PC-9 (cell line): ENCODE measurements at regions of chr1 and their contacts with region 1.

Region 1: DNA sequence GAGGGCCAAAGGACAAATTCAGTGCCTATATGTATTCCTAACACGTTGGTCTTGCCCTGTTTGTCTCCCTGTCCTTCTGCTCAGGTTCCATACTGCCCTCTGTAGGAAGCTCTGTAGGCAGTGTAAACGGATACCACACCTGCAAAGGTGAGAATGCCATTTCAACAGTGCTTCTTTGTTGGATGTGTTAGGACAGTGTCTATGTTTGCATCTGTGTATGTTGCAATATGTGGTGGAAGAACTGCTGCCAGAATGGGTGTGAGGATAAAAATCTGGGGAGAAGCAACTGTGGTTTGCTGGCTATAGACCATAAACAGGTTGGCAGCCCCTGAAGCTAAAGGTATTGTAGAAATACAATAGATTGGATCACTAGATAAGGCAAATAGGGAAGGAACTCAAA is 113.1 kb upstream of the BMP8A start:
- DNase-seq: peak; percentile 34 to 84
- H3K4me3 ChIP-seq: no peak overlapping the region
- H3K27ac ChIP-seq: no peak overlapping the region
- H3K4me1 ChIP-seq: peaks cover 10% of the 10 kb centered on the region; the same call in 1 of the 2 replicates
- H3K27me3 ChIP-seq: no peaks in the 10 kb centered on the region
- CTCF ChIP-seq: peak; percentile 68

Region 2: GRCh38 chr1:39391691-39392679 is 13.6 kb after region 1 on chr1:
- CTCF ChIA-PET with region 1: interaction called, 14 read pairs
- POLR2A ChIA-PET with region 1: interaction called, 9 read pairs
- intact Hi-C with region 1: no loop called
- DNase-seq: peak; percentile 31 to 72
- H3K4me3 ChIP-seq: peak overlapping the region; percentile 25
- H3K27ac ChIP-seq: peak overlapping the region; percentile 79
- H3K4me1 ChIP-seq: peaks cover 74% of the 10 kb centered on the region
- H3K27me3 ChIP-seq: no peaks in the 10 kb centered on the region
- CTCF ChIP-seq: no peak

Region 3: GRCh38 chr1:39398278-39399021 is 20.1 kb after region 1 on chr1:
- CTCF ChIA-PET with region 1: interaction called, 11 read pairs
- POLR2A ChIA-PET with region 1: no interaction called
- intact Hi-C with region 1: no loop called
- DNase-seq: peak; percentile 91 to 100
- H3K4me3 ChIP-seq: peak overlapping the region; percentile 22; the same call in 1 of the 2 replicates
- H3K27ac ChIP-seq: peak overlapping the region; percentile 91
- H3K4me1 ChIP-seq: peaks cover 66% of the 10 kb centered on the region
- H3K27me3 ChIP-seq: no peaks in the 10 kb centered on the region
- CTCF ChIP-seq: no peak

Region 4: DNA sequence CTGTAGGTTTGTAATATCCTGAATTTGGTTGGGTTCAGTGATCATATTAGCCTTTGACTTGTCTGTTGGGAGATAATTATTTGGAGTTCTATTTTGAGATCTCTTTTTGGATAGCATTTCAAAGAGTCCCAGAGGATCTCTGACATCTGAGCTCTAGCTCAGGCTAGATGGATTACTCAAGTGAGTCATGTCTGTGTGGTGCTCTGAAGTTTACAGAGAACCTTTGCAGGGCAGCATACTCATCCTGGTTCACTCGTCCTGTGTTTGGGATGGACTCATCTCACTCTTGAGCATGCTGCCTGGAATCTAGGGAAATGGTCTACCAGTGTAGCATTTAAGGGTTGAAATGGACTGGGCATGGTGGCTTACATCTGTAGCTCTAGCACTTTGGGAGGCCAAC is 83.7 kb after region 1 on chr1:
- CTCF ChIA-PET with region 1: no interaction called
- POLR2A ChIA-PET with region 1: interaction called, 20 read pairs
- intact Hi-C with region 1: no loop called
- DNase-seq: no peak
- H3K4me3 ChIP-seq: no peak overlapping the region
- H3K27ac ChIP-seq: no peak overlapping the region
- H3K4me1 ChIP-seq: no peaks in the 10 kb centered on the region
- H3K27me3 ChIP-seq: no peaks in the 10 kb centered on the region
- CTCF ChIP-seq: no peak

Region 5: GRCh38 chr1:39808784-39809517 is 430.6 kb after region 1 on chr1:
- CTCF ChIA-PET with region 1: no interaction called
- POLR2A ChIA-PET with region 1: no interaction called
- intact Hi-C with region 1: no loop called
- DNase-seq: peak in 1 of 2 experiments; percentile 23
- H3K4me3 ChIP-seq: no peak overlapping the region
- H3K27ac ChIP-seq: no peak overlapping the region
- H3K4me1 ChIP-seq: no peaks in the 10 kb centered on the region
- H3K27me3 ChIP-seq: no peaks in the 10 kb centered on the region
- CTCF ChIP-seq: no peak